GM12878 (cell line): ENCODE measurements at regions of chr3 and their contacts with region 1.

Region 1: GRCh38 chr3:138567401-138567800 is 26.7 kb downstream of the CEP70 start:
- DNase-seq: no peak
- ATAC-seq: no peak
- H3K4me3 ChIP-seq: no peak overlapping the region
- H3K27ac ChIP-seq: no peak overlapping the region
- H3K4me1 ChIP-seq: no peaks in the 10 kb centered on the region
- H3K27me3 ChIP-seq: no peaks in the 10 kb centered on the region
- CTCF ChIP-seq: peak in 1 of 3 experiments; percentile 8; a peak in 2 of 6 replicates
- EP300 ChIP-seq: no peak
- POLR2A ChIP-seq: no peak
- RAD21 ChIP-seq: no peak

Region 2: DNA sequence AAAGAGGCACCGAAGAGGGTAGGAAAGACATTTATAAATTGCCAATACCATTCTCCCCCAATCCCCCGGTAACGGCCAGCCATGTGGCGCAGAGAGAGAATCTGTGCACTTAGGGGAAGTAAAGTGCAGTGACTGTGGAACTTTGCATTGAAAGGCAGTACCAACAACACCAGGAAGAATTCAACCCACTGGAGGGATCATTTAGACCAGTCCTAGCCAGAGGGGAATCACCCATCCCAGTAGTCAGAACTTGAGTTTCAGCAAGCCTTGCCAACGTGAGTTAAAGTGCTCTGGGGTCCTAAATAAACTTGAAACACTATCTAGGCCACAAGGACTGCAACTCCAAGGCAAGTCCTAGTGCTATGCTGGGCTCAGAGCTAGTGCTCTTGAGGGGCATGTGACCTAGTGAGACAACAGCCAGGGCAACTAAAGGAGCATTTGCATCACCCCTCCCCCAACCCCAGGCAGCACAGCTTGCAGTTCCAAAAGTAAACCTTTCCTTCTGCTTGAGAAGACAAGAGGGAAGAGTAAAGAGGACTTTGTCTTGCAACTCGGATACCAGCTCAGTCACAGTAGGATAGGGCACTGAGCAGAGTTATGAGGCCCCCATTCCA is 11.7 kb after region 1 on chr3:
- CTCF ChIA-PET with region 1: interaction called, 11 read pairs
- POLR2A ChIA-PET with region 1: interaction called, 4 read pairs
- RAD21 ChIA-PET with region 1: no interaction called
- SMC1A ChIA-PET with region 1: interaction called, 5 read pairs
- in situ Hi-C with region 1: no loop called
- intact Hi-C with region 1: no loop called
- DNase-seq: no peak
- ATAC-seq: peak; percentile 52
- H3K4me3 ChIP-seq: no peak overlapping the region
- H3K27ac ChIP-seq: no peak overlapping the region
- H3K4me1 ChIP-seq: peaks cover 15% of the 10 kb centered on the region
- H3K27me3 ChIP-seq: no peaks in the 10 kb centered on the region
- CTCF ChIP-seq: no peak
- EP300 ChIP-seq: no peak
- POLR2A ChIP-seq: no peak
- RAD21 ChIP-seq: no peak

Region 3: DNA sequence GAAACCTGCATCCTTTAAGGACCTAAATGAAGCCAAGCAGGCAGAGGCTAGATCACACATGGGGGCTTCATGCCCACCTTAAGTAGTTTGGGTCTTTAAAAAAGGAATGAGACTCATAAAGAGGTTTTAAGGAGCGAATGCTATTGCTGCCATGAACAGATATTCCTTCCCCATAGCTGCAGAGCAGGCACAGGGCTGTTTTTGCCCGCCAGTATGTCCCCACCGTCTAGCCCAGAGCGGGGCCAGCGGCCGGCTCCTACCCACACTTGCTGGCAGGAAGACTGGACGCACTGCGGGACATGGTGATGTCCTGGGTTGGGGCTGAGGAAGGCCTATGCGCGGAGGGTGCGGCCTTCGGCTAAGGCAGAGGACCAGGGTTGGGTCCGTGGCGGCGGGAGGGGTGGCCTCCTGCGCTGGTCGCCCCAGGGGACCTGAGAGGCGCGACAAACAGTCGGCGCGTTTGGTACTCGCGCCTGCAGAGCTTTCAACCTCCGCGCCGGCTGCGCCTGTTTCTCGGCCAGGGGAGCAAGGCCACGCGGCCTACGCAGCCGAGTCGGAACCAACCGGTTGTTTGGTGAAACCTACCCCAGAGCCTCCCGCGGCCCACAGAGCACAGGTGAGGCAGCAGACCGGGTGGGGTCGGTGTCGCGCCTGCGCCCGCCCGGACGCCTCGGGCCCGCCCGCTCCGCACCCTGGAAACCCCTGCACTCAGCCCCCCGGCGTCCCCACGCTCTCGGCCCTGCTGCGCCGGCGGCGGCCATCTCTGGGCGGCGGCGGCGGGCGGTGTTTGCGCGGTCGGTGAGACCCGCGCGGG is 41.1 kb after region 1 on chr3 and contains the start of gene FAIM:
- CTCF ChIA-PET with region 1: no interaction called
- POLR2A ChIA-PET with region 1: no interaction called
- RAD21 ChIA-PET with region 1: no interaction called
- SMC1A ChIA-PET with region 1: no interaction called
- in situ Hi-C with region 1: no loop called
- intact Hi-C with region 1: no loop called
- DNase-seq: no peak
- ATAC-seq: peak; percentile 89
- H3K4me3 ChIP-seq: peak within 1 kb of the TSS; percentile 68
- H3K27ac ChIP-seq: peak within 1 kb of the TSS; percentile 38
- H3K4me1 ChIP-seq: peaks cover 5% of the 10 kb centered on the region
- H3K27me3 ChIP-seq: no peaks in the 10 kb centered on the region
- CTCF ChIP-seq: no peak
- EP300 ChIP-seq: no peak
- POLR2A ChIP-seq: peak; percentile 81
- RAD21 ChIP-seq: no peak
- polyA plus RNA-seq, gene FAIM: 21.5 to 32.8 TPM